ENCODE measurements at regions of chr3 and their contacts with region 1.

Region 1: GRCh38 chr3:142429582-142429981 is 18.3 kb downstream of the XRN1 start:
- DNase-seq: no peak
- ATAC-seq: no peak
- H3K4me3 ChIP-seq: no peak overlapping the region
- H3K4me3 Mint-ChIP-seq: no peak overlapping the region
- H3K27ac ChIP-seq: no peak overlapping the region
- H3K27ac Mint-ChIP-seq: peak overlapping the region in 1 of 9 donors; percentile 38
- H3K4me1 ChIP-seq: no peaks in the 10 kb centered on the region
- H3K4me1 Mint-ChIP-seq: peaks cover 11 to 26% (median 19%) of the 10 kb centered on the region in 7 donors
- H3K27me3 ChIP-seq: no peaks in the 10 kb centered on the region
- H3K27me3 Mint-ChIP-seq: no peaks in the 10 kb centered on the region

Region 2: GRCh38 chr3:142417302-142417701 is 12.3 kb before region 1 on chr3:
- CTCF ChIA-PET with region 1: no interaction called
- POLR2A ChIA-PET with region 1: no interaction called
- intact Hi-C with region 1: loop called in 1 of 2 experiments (anchors 2 kb)
- DNase-seq: no peak
- ATAC-seq: no peak
- H3K4me3 ChIP-seq: no peak overlapping the region
- H3K4me3 Mint-ChIP-seq: no peak overlapping the region
- H3K27ac ChIP-seq: no peak overlapping the region
- H3K27ac Mint-ChIP-seq: peak overlapping the region in 1 of 9 donors; percentile 52
- H3K4me1 ChIP-seq: no peaks in the 10 kb centered on the region
- H3K4me1 Mint-ChIP-seq: no peaks in the 10 kb centered on the region
- H3K27me3 ChIP-seq: no peaks in the 10 kb centered on the region
- H3K27me3 Mint-ChIP-seq: no peaks in the 10 kb centered on the region

Measured in naive thymus-derived CD4-positive, alpha-beta T cell (primary cell).